Activated T-helper 1 cell treated with anti-CD3 and anti-CD28 coated beads, Interleukin-12 subunit alpha, Interleukin-12 subunit beta, Interleukin-2, Interleukin-4 antibody, amounts not matched to agents 30 ng/mL and 10 ng/mL and 1 ng/mL, durations not matched to agents 14 hours and 24 hours and 36 hours (primary cell): ENCODE measurements at regions of chr16 and their contacts with region 1.

Region 1: GRCh38 chr16:66988197-66988788 is at the start of gene CES4A:
- DNase-seq: no peak
- H3K4me3 Mint-ChIP-seq: no peak within 1 kb of the TSS
- H3K27ac Mint-ChIP-seq: peak within 1 kb of the TSS; percentile 73
- H3K4me1 Mint-ChIP-seq: peaks cover 32% of the 10 kb centered on the region
- H3K27me3 Mint-ChIP-seq: no peaks in the 10 kb centered on the region
- total RNA-seq, gene CES4A: 33.2 and 34.2 TPM in 2 replicates

Region 2: GRCh38 chr16:66880288-66881013 is 107.8 kb before region 1 on chr16 and contains the start of gene PDP2:
- intact Hi-C with region 1: loop called (anchors 2 kb)
- DNase-seq: peak; percentile 92
- H3K4me3 Mint-ChIP-seq: peak within 1 kb of the TSS; percentile 98
- H3K27ac Mint-ChIP-seq: peak within 1 kb of the TSS; percentile 95
- H3K4me1 Mint-ChIP-seq: peaks cover 51% of the 10 kb centered on the region
- H3K27me3 Mint-ChIP-seq: no peaks in the 10 kb centered on the region
- total RNA-seq, gene PDP2: 43.3 and 52.2 TPM in 2 replicates

Region 3: GRCh38 chr16:67000384-67001351 is 12.4 kb after region 1 on chr16:
- intact Hi-C with region 1: loop called (anchors 1 kb)
- DNase-seq: peak; percentile 55
- H3K4me3 Mint-ChIP-seq: peak overlapping the region; percentile 76
- H3K27ac Mint-ChIP-seq: peak overlapping the region; percentile 88
- H3K4me1 Mint-ChIP-seq: peaks cover 45% of the 10 kb centered on the region
- H3K27me3 Mint-ChIP-seq: no peaks in the 10 kb centered on the region

Region 4: GRCh38 chr16:67055712-67056487 is 67.6 kb after region 1 on chr16:
- intact Hi-C with region 1: loop called (anchors 1 kb)
- DNase-seq: no peak
- H3K4me3 Mint-ChIP-seq: peak overlapping the region; percentile 74
- H3K27ac Mint-ChIP-seq: peak overlapping the region; percentile 96
- H3K4me1 Mint-ChIP-seq: peaks cover 51% of the 10 kb centered on the region
- H3K27me3 Mint-ChIP-seq: no peaks in the 10 kb centered on the region

Region 5: DNA sequence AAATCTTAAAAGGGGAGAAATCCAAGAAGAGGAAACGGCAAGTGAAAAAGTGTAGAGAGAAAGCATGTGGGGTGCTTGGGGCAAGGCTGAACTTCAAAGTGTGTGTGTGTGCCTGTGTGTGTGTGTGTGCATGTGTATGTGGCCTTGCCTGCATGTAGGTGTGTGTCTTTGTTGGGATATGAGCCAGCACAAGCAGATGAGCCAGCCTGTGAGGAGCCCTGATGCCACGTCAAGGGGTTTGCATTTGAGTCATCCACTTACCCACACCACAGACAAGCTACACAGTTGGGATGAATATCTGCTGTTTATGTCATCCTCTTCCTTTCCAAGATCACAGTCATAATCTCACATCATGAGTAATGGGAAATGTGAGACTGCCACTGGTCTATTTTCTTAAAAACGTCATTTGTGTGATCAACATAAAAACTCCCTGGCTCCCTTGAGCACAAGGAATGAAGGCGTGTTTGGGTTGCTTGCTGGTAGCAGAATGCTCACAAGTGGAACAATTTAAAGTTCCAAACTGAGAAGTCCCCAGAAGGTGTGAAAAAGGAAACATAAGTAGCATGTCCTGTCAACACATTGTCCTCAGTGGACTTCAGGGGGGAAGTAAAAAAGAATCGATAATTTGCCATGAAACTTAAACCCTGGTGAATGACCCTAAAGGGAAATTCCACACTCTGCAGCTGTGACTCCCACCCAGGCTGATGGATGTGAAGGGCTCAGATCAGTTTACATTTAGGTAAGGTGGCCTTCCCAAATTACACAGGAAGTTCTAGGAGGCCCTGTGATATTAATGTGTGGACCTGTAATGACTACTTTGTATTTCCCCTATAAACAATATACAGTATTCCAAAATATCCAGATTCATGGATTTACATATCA is 323.6 kb after region 1 on chr16:
- intact Hi-C with region 1: loop called (anchors 1 kb)
- DNase-seq: peak; percentile 78
- H3K4me3 Mint-ChIP-seq: peak overlapping the region; percentile 19
- H3K27ac Mint-ChIP-seq: peak overlapping the region; percentile 98
- H3K4me1 Mint-ChIP-seq: peaks cover 45% of the 10 kb centered on the region
- H3K27me3 Mint-ChIP-seq: no peaks in the 10 kb centered on the region